Mammary epithelial cell (primary cell): ENCODE measurements at regions of chr7 and their contacts with region 1.

Region 1: DNA sequence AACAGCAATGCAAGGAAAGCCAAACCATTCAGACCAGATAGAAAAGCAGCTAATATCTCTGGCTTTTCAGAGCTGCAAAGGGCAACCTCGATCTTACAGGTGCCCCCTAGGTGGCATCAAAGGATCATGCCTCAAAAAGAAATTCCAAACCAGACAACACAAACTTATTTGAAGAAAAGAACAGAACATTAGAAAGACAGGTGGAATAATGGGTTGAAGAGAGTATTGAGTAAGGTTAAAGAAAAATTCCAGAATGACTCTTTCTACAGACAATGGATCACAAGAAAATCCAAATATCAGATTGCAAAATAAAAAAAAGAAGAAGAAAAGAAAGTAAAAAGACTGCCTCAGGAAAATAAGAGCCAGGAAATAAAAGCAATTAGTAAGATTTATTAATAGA is 213.7 kb downstream of the ELMO1 start:
- DNase-seq: peak; percentile 15
- H3K4me3 ChIP-seq: no peak overlapping the region
- H3K27ac ChIP-seq: no peak overlapping the region
- H3K4me1 ChIP-seq: no peaks in the 10 kb centered on the region
- H3K27me3 ChIP-seq: no peaks in the 10 kb centered on the region
- CTCF ChIP-seq: peak; percentile 22 to 68

Region 2: GRCh38 chr7:37160656-37161055 is 74.3 kb before region 1 on chr7:
- CTCF ChIA-PET with region 1: no interaction called
- dilution Hi-C with region 1: no loop called
- in situ Hi-C with region 1: no loop called
- intact Hi-C with region 1: no loop called
- DNase-seq: no peak
- H3K4me3 ChIP-seq: no peak overlapping the region
- H3K27ac ChIP-seq: no peak overlapping the region
- H3K4me1 ChIP-seq: no peaks in the 10 kb centered on the region
- H3K27me3 ChIP-seq: no peaks in the 10 kb centered on the region
- CTCF ChIP-seq: no peak

Region 3: GRCh38 chr7:37284805-37285231 is 49.9 kb after region 1 on chr7:
- CTCF ChIA-PET with region 1: no interaction called
- dilution Hi-C with region 1: no loop called
- in situ Hi-C with region 1: no loop called
- intact Hi-C with region 1: no loop called
- DNase-seq: peak; percentile 28
- H3K4me3 ChIP-seq: no peak overlapping the region
- H3K27ac ChIP-seq: no peak overlapping the region
- H3K4me1 ChIP-seq: no peaks in the 10 kb centered on the region
- H3K27me3 ChIP-seq: no peaks in the 10 kb centered on the region
- CTCF ChIP-seq: peak; percentile 43 to 58

Region 4: DNA sequence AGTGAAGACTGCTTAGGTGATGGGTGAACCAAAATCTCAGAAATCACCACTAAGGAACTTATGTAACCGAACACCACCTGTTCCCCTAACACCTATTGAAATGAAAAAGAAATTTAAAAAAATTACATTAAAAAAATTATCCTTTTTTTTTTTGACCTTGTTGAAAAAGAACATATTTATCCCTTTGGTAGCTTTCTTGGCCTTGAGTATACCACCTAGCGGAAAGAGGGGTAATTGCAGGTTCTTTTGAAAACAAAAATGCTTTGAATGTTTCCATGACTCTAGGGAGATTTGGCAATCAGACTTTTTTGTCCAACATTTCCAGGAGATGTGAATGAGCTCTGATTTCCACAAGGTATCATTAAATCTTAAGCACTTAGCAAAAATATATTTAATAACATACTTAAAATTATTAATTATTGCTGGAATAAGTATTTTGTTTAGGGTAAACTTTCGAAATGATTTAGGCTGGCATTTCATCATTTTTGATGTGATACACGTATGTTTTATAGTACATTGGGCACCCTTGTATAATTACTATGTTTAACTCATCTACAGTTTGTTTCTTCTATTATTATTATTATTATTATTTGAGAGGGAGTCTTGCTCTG is 260.8 kb after region 1 on chr7:
- CTCF ChIA-PET with region 1: no interaction called
- dilution Hi-C with region 1: no loop called
- in situ Hi-C with region 1: loop called in 1 of 2 experiments (anchors 25 kb)
- intact Hi-C with region 1: loop called (anchors 1 kb)
- DNase-seq: peak; percentile 25
- H3K4me3 ChIP-seq: no peak overlapping the region
- H3K27ac ChIP-seq: no peak overlapping the region
- H3K4me1 ChIP-seq: no peaks in the 10 kb centered on the region
- H3K27me3 ChIP-seq: no peaks in the 10 kb centered on the region
- CTCF ChIP-seq: peak; percentile 61 to 70

Region 5: GRCh38 chr7:37510043-37510634 is 275.2 kb after region 1 on chr7:
- CTCF ChIA-PET with region 1: interaction called, 11 read pairs
- dilution Hi-C with region 1: no loop called
- in situ Hi-C with region 1: loop called in 1 of 2 experiments (anchors 25 kb)
- intact Hi-C with region 1: loop called (anchors 1 kb)
- DNase-seq: no peak
- H3K4me3 ChIP-seq: no peak overlapping the region
- H3K27ac ChIP-seq: no peak overlapping the region
- H3K4me1 ChIP-seq: no peaks in the 10 kb centered on the region
- H3K27me3 ChIP-seq: no peaks in the 10 kb centered on the region
- CTCF ChIP-seq: peak; percentile 60 to 69